ENCODE measurements at regions of chr4 and their contacts with region 1.

Region 1: GRCh38 chr4:139301113-139301820 is at the start of gene NAA15:
- DNase-seq: peak; percentile 98
- ATAC-seq: peak; percentile 93
- H3K4me3 Mint-ChIP-seq: peak within 1 kb of the TSS; percentile 84
- H3K27ac Mint-ChIP-seq: peak within 1 kb of the TSS; percentile 95
- H3K4me1 Mint-ChIP-seq: peaks cover 52% of the 10 kb centered on the region
- H3K27me3 Mint-ChIP-seq: no peaks in the 10 kb centered on the region
- CTCF ChIP-seq: no peak
- total RNA-seq, gene NAA15: 113 to 114 TPM

Region 2: GRCh38 chr4:139083956-139084803 is 217.1 kb before region 1 on chr4:
- CTCF ChIA-PET with region 1: interaction called, 5 read pairs
- POLR2A ChIA-PET with region 1: interaction called, 7 read pairs
- intact Hi-C with region 1: loop called (anchors 2 kb)
- DNase-seq: peak; percentile 88
- ATAC-seq: peak; percentile 49
- H3K4me3 Mint-ChIP-seq: peak overlapping the region; percentile 100
- H3K27ac Mint-ChIP-seq: peak overlapping the region; percentile 100
- H3K4me1 Mint-ChIP-seq: peaks cover 25% of the 10 kb centered on the region
- H3K27me3 Mint-ChIP-seq: no peaks in the 10 kb centered on the region
- CTCF ChIP-seq: no peak

Region 3: GRCh38 chr4:139099366-139099982 is 201.8 kb before region 1 on chr4:
- CTCF ChIA-PET with region 1: interaction called, 31 read pairs
- POLR2A ChIA-PET with region 1: no interaction called
- intact Hi-C with region 1: loop called (anchors 5 kb)
- DNase-seq: peak; percentile 81
- ATAC-seq: peak; percentile 70
- H3K4me3 Mint-ChIP-seq: no peak overlapping the region
- H3K27ac Mint-ChIP-seq: no peak overlapping the region
- H3K4me1 Mint-ChIP-seq: no peaks in the 10 kb centered on the region
- H3K27me3 Mint-ChIP-seq: no peaks in the 10 kb centered on the region
- CTCF ChIP-seq: peak; percentile 86

Region 4: GRCh38 chr4:139177868-139178611 is 123.2 kb before region 1 on chr4:
- CTCF ChIA-PET with region 1: interaction called, 12 read pairs
- POLR2A ChIA-PET with region 1: interaction called, 7 read pairs
- intact Hi-C with region 1: loop called (anchors 5 kb)
- DNase-seq: peak; percentile 91
- ATAC-seq: peak; percentile 81
- H3K4me3 Mint-ChIP-seq: peak overlapping the region; percentile 82
- H3K27ac Mint-ChIP-seq: peak overlapping the region; percentile 85
- H3K4me1 Mint-ChIP-seq: peaks cover 13% of the 10 kb centered on the region
- H3K27me3 Mint-ChIP-seq: peaks cover 14% of the 10 kb centered on the region
- CTCF ChIP-seq: no peak

Measured in activated CD8-positive, alpha-beta T cell treated with anti-CD3 and anti-CD28 coated beads for 36 hours (primary cell).